B cell (primary cell): ENCODE measurements at regions of chr9 and their contacts with region 1.

Region 1: GRCh38 chr9:128818099-128818838 is at the start of gene ENDOG:
- DNase-seq: peak; percentile 97
- ATAC-seq: peak; percentile 95
- H3K4me3 ChIP-seq: peak within 1 kb of the TSS; percentile 68 to 76 (median 69)
- H3K4me3 Mint-ChIP-seq: peak within 1 kb of the TSS; percentile 95
- H3K27ac ChIP-seq: peak within 1 kb of the TSS in 1 of 2 donors; percentile 53
- H3K27ac Mint-ChIP-seq: peak within 1 kb of the TSS; percentile 94
- H3K4me1 ChIP-seq: peaks cover 5 to 16% of the 10 kb centered on the region in 2 donors
- H3K4me1 Mint-ChIP-seq: peaks cover 14% of the 10 kb centered on the region
- H3K27me3 ChIP-seq: no peaks in the 10 kb centered on the region
- H3K27me3 Mint-ChIP-seq: no peaks in the 10 kb centered on the region
- CTCF ChIP-seq: peak; percentile 95
- total RNA-seq, gene ENDOG: 17.1 and 19.3 TPM in 2 replicates

Region 2: GRCh38 chr9:128231638-128232527 is 586.4 kb before region 1 on chr9:
- CTCF ChIA-PET with region 1: no interaction called
- POLR2A ChIA-PET with region 1: no interaction called
- intact Hi-C with region 1: no loop called
- DNase-seq: no peak
- ATAC-seq: no peak
- H3K4me3 ChIP-seq: no peak overlapping the region
- H3K4me3 Mint-ChIP-seq: no peak overlapping the region
- H3K27ac ChIP-seq: no peak overlapping the region
- H3K27ac Mint-ChIP-seq: no peak overlapping the region
- H3K4me1 ChIP-seq: no peaks in the 10 kb centered on the region
- H3K4me1 Mint-ChIP-seq: no peaks in the 10 kb centered on the region
- H3K27me3 ChIP-seq: no peaks in the 10 kb centered on the region
- H3K27me3 Mint-ChIP-seq: peaks cover 4% of the 10 kb centered on the region
- CTCF ChIP-seq: no peak

Region 3: DNA sequence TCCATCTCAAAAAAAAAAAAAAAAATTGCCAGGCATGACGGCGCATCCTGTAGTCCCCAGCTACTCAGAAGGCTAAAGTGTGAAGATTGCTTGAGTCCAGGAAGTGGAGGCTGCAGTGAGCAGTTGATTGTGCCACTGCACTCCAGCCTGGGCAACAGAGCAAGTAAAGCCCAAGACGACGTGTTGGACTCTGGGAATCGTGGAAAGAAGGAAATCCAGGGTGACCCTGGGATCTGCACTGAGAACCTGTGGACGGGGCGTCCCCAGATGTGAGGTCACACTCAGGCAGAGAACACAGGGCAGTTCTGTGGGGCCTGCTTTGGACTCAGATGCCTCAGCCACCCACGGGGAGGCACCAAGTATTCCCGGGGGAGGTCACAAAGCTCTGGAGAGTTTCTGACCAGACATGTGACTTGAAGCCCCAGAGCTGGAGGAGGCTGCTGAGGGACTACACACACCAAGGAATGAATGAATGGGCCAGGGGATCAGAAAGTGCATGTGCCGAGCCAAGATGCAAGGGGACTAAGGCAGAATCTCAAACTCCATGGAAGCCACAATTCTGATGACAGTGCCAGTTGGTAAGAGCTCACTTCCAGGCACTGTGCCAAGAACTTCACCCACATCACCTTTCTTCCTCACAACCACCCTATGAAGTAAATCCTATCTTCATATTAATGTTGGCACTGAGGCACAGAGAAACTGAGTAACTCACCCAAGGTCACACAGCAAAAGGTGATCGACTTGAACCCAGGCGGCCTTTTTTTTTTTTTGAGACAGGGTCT is 174.6 kb before region 1 on chr9:
- CTCF ChIA-PET with region 1: interaction called, 11 read pairs
- POLR2A ChIA-PET with region 1: no interaction called
- intact Hi-C with region 1: loop called (anchors 2 kb)
- DNase-seq: peak; percentile 50
- ATAC-seq: peak; percentile 71
- H3K4me3 ChIP-seq: no peak overlapping the region
- H3K4me3 Mint-ChIP-seq: peak overlapping the region; percentile 69
- H3K27ac ChIP-seq: peak overlapping the region; percentile 29 to 56
- H3K27ac Mint-ChIP-seq: peak overlapping the region; percentile 92
- H3K4me1 ChIP-seq: peaks cover 6 to 15% of the 10 kb centered on the region in 2 donors
- H3K4me1 Mint-ChIP-seq: peaks cover 18% of the 10 kb centered on the region
- H3K27me3 ChIP-seq: no peaks in the 10 kb centered on the region
- H3K27me3 Mint-ChIP-seq: no peaks in the 10 kb centered on the region
- CTCF ChIP-seq: no peak

Region 4: DNA sequence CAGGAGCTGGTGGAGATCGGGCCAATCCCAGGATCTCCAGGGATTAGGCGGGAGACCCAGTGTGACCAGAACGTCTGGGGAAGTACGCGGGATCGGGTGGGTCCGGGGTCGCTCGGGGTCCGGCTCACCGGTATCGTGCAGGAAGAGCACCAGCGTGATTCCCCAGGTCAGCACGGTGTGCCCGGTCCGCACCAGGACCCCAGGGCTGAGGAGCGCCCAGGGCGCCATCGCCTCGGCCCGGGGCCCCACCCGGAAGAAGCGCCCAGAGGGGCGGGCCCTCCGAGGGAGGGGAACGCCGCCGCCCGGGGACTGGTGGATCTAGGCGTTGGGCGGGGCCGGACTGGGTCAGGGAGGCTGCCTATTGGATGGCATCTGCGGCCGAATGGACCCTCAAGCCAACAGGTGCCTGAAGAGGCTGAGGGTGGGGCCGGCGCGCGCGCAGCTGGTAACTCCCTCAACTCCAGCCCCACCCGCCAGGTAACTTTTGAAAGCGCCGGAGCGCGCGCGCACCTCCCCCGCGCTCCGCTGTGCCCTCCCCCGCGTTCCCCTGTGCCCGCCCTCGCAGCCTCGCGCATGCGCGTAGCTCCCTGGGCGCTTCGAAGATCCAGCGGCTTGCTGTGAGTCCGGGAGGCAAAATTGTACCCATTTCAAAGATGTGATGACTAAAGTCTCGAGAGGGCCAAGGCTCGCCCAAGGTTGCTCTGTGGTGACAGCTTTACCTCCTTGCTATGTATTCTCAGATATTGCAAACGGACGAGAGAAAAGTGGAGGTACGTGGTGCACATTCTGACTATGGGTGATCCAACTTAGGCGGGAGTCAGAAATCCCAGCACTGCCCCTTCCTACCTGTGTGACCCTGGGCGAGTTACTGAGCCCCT is 94.2 kb before region 1 on chr9 and contains the start of gene ZDHHC12:
- CTCF ChIA-PET with region 1: interaction called, 5 read pairs
- POLR2A ChIA-PET with region 1: no interaction called
- intact Hi-C with region 1: loop called (anchors 1 kb)
- DNase-seq: peak; percentile 99
- ATAC-seq: peak; percentile 97
- H3K4me3 ChIP-seq: peak within 1 kb of the TSS; percentile 62 to 96 (median 92)
- H3K4me3 Mint-ChIP-seq: peak within 1 kb of the TSS; percentile 97
- H3K27ac ChIP-seq: peak within 1 kb of the TSS; percentile 66 to 82
- H3K27ac Mint-ChIP-seq: peak within 1 kb of the TSS; percentile 91
- H3K4me1 ChIP-seq: peaks cover 18 to 23% of the 10 kb centered on the region in 2 donors
- H3K4me1 Mint-ChIP-seq: peaks cover 31% of the 10 kb centered on the region
- H3K27me3 ChIP-seq: no peaks in the 10 kb centered on the region
- H3K27me3 Mint-ChIP-seq: no peaks in the 10 kb centered on the region
- CTCF ChIP-seq: no peak
- total RNA-seq, gene ZDHHC12: 25.3 and 28.5 TPM in 2 replicates

Region 5: DNA sequence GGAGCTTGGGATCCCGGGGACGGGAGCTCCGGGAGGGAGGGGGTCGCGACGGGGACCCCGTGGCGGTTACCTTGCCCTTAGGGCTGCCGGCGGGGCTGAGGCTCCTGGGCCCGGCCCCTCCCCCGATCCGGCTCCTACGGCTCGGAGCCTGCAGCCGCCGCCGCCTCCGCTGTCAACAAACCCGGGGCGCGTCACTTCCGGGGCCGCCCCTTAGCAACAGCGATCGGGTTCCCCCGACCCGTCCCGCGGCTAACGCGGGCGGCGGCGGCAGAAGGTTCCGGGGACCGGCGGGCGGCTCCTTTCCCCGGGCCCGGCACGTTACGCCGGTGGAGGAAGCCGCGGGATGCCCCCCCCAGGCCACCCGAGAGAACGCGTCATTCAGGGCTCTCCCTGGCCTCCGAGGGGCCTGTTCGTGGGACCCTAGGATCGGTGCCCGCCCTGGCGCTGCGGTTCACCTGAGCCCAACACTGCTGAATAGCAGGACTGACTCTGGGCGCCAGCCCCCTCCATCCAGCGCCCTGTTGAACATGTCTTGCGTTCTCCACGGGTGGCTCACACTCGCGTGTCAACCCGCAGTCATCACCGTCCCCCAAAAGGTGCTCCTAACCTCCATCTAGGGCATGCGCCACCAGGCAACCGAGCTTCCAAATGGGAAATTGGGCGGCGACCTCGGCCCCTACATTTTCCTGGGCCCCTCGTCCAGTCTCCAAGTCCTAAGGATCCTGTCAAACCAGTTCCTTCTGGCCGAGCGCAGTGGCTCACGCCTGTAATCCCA is 46.3 kb before region 1 on chr9 and contains the start of gene ZER1:
- CTCF ChIA-PET with region 1: interaction called, 5 read pairs
- POLR2A ChIA-PET with region 1: interaction called, 3 read pairs
- intact Hi-C with region 1: loop called (anchors 1 kb)
- DNase-seq: peak; percentile 95
- ATAC-seq: peak; percentile 93
- H3K4me3 ChIP-seq: peak within 1 kb of the TSS; percentile 69 to 96 (median 77)
- H3K4me3 Mint-ChIP-seq: peak within 1 kb of the TSS; percentile 97
- H3K27ac ChIP-seq: peak within 1 kb of the TSS; percentile 86 to 93
- H3K27ac Mint-ChIP-seq: peak within 1 kb of the TSS; percentile 96
- H3K4me1 ChIP-seq: peaks cover 9 to 19% of the 10 kb centered on the region in 2 donors
- H3K4me1 Mint-ChIP-seq: peaks cover 25% of the 10 kb centered on the region
- H3K27me3 ChIP-seq: no peaks in the 10 kb centered on the region
- H3K27me3 Mint-ChIP-seq: no peaks in the 10 kb centered on the region
- CTCF ChIP-seq: no peak
- total RNA-seq, gene ZER1: 42.2 and 44.0 TPM in 2 replicates

Region 6: DNA sequence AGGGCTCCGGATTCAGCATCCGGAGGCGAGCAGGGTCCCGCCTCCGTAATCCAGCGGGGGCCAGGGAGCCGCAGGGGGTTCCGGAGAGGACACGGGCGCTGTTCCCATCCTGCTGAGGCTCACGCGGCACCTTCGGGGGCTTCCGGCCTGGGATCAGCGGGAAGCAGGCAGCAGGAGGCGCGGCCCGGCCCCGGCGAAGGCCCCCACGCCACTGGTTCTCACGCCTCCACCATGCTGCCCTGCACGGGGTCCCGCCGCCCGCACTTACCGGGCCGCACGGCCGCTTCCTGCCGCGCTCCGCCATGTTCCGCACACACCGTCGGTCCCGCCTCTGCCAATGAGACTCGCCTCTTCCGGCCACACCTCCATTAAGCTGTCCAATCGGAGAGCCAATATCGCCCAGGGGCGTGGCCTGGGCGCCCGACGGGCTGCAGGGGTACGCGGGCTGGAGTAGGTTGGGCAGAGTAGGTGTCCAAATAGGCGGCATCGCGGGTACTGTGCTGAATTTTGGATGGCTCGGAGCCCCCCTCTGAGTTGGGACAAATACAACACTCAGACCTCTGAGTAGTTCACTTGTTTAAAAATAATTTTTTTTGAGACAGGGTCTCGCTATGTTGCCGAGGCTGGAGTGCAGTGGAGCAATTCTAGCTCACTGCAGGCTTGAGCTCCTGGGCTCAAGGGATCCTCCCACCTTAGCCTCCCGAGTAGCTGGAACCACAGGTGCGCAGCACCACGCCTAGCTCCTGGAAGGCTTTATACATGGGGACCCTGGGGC is 11.4 kb after region 1 on chr9 and contains the start of gene SPOUT1:
- CTCF ChIA-PET with region 1: interaction called, 23 read pairs
- POLR2A ChIA-PET with region 1: interaction called, 5 read pairs
- intact Hi-C with region 1: loop called (anchors 1 kb)
- DNase-seq: peak; percentile 95
- ATAC-seq: peak; percentile 99
- H3K4me3 ChIP-seq: peak within 1 kb of the TSS; percentile 43 to 97 (median 91)
- H3K4me3 Mint-ChIP-seq: peak within 1 kb of the TSS; percentile 97
- H3K27ac ChIP-seq: peak within 1 kb of the TSS; percentile 42 to 74
- H3K27ac Mint-ChIP-seq: peak within 1 kb of the TSS; percentile 95
- H3K4me1 ChIP-seq: peaks cover 12 to 17% of the 10 kb centered on the region in 2 donors
- H3K4me1 Mint-ChIP-seq: peaks cover 19% of the 10 kb centered on the region
- H3K27me3 ChIP-seq: no peaks in the 10 kb centered on the region
- H3K27me3 Mint-ChIP-seq: no peaks in the 10 kb centered on the region
- CTCF ChIP-seq: no peak
- total RNA-seq, gene SPOUT1: 70.0 and 73.0 TPM in 2 replicates

Region 7: DNA sequence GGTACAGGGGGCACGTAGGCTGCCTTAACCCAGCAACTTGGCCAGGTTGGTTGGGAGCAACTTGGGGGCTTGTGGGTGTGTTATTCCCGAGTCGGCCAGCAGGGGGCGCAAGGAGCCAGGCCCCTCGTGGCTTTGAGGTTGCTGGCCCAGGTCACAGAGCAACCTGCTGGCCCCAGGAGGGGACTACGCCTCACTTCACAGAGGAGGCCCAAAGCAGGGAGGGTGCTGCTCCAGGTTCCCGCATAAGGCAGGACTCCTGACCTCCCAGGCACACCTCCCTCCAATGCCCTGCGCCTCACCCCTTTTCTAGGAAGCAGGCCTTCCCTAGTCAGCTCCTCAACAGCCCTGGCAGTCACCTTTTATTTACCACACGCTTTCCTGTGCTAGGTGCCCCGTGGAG is 45.4 kb after region 1 on chr9:
- CTCF ChIA-PET with region 1: interaction called, 6 read pairs
- POLR2A ChIA-PET with region 1: no interaction called
- intact Hi-C with region 1: loop called (anchors 1 kb)
- DNase-seq: peak; percentile 86
- ATAC-seq: peak; percentile 98
- H3K4me3 ChIP-seq: no peak overlapping the region
- H3K4me3 Mint-ChIP-seq: no peak overlapping the region
- H3K27ac ChIP-seq: no peak overlapping the region
- H3K27ac Mint-ChIP-seq: peak overlapping the region; percentile 37
- H3K4me1 ChIP-seq: peaks cover 3 to 4% of the 10 kb centered on the region in 2 donors
- H3K4me1 Mint-ChIP-seq: peaks cover 4% of the 10 kb centered on the region
- H3K27me3 ChIP-seq: no peaks in the 10 kb centered on the region
- H3K27me3 Mint-ChIP-seq: no peaks in the 10 kb centered on the region
- CTCF ChIP-seq: peak; percentile 92

Region 8: DNA sequence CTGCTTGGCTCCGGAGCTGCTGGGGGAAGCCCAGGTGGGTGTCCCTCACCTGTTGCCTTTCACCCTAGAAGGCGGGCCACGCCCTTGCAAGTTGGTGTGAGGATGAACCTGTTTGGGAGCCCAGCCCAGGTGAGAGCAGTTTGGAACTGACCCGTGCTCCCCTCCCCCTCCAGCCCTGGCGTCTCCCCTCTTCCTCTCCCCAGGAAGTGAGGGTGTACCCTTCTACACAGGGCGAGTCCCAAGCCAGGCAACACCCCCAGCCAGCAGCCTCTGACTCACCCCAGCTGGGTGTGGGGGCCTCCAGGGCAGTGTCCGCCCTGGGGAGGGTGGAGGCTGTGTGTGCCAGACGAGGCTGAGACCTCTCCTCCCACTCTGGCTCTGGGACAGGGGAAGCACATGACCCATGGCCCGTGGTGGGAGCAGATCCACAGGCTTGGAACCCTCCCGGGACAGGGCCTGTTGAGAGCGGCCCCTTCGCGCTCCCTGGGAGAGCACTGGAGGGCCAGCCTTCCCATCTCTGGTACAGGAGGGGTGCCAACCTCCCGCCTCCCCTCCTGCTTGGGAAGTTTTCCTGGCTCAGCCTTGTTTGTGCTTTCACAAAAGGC is 74.2 kb after region 1 on chr9:
- CTCF ChIA-PET with region 1: no interaction called
- POLR2A ChIA-PET with region 1: no interaction called
- intact Hi-C with region 1: no loop called
- DNase-seq: no peak
- ATAC-seq: no peak
- H3K4me3 ChIP-seq: no peak overlapping the region
- H3K4me3 Mint-ChIP-seq: no peak overlapping the region
- H3K27ac ChIP-seq: no peak overlapping the region
- H3K27ac Mint-ChIP-seq: no peak overlapping the region
- H3K4me1 ChIP-seq: peaks cover 0 to 4% of the 10 kb centered on the region in 2 donors
- H3K4me1 Mint-ChIP-seq: peaks cover 21% of the 10 kb centered on the region
- H3K27me3 ChIP-seq: no peaks in the 10 kb centered on the region
- H3K27me3 Mint-ChIP-seq: no peaks in the 10 kb centered on the region
- CTCF ChIP-seq: no peak

Region 9: GRCh38 chr9:128947422-128948301 is 129.4 kb after region 1 on chr9 and contains the starts of genes DOLK and NUP188:
- CTCF ChIA-PET with region 1: interaction called, 8 read pairs
- POLR2A ChIA-PET with region 1: interaction called, 11 read pairs
- intact Hi-C with region 1: no loop called
- DNase-seq: peak; percentile 98
- ATAC-seq: peak; percentile 86
- H3K4me3 ChIP-seq: peak within 1 kb of the TSS; percentile 64 to 95 (median 84)
- H3K4me3 Mint-ChIP-seq: peak within 1 kb of the TSS; percentile 97
- H3K27ac ChIP-seq: peak within 1 kb of the TSS; percentile 91 to 96
- H3K27ac Mint-ChIP-seq: peak within 1 kb of the TSS; percentile 98
- H3K4me1 ChIP-seq: peaks cover 15 to 18% of the 10 kb centered on the region in 2 donors
- H3K4me1 Mint-ChIP-seq: peaks cover 27% of the 10 kb centered on the region
- H3K27me3 ChIP-seq: no peaks in the 10 kb centered on the region
- H3K27me3 Mint-ChIP-seq: no peaks in the 10 kb centered on the region
- CTCF ChIP-seq: no peak
- total RNA-seq, gene DOLK: 11.1 and 12.2 TPM in 2 replicates
- total RNA-seq, gene NUP188: 83.6 and 93.2 TPM in 2 replicates